BJ (cell line): ENCODE measurements at regions of chr3 and their contacts with region 1.

Region 1: GRCh38 chr3:62188681-62189383 is 184.5 kb downstream of the FEZF2 start:
- DNase-seq: peak; percentile 16
- H3K4me3 ChIP-seq: no peak overlapping the region
- H3K27me3 ChIP-seq: no peaks in the 10 kb centered on the region
- CTCF ChIP-seq: peak; percentile 75

Region 2: DNA sequence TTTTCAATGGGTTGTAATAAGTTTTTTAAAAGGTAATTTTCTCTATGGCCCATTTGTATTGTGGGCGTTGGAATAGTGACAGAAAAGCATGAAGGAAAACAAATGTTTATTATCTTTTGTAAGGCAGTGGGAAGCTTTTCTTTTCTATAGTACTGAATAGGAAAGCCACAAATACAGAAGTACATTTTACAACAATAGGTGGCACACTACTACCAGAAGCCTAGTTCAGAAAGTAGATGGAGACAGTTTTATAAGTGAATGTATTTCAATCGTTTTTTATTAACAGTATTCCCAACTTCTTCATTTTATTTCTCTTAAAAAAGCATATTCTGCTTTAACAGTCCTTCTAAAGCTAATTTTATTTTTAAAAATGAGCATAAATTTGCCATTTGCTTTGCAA is 330.8 kb before region 1 on chr3:
- CTCF ChIA-PET with region 1: interaction called, 16 read pairs
- POLR2A ChIA-PET with region 1: no interaction called
- DNase-seq: no peak
- H3K4me3 ChIP-seq: no peak overlapping the region
- H3K27me3 ChIP-seq: no peaks in the 10 kb centered on the region
- CTCF ChIP-seq: peak; percentile 41

Region 3: DNA sequence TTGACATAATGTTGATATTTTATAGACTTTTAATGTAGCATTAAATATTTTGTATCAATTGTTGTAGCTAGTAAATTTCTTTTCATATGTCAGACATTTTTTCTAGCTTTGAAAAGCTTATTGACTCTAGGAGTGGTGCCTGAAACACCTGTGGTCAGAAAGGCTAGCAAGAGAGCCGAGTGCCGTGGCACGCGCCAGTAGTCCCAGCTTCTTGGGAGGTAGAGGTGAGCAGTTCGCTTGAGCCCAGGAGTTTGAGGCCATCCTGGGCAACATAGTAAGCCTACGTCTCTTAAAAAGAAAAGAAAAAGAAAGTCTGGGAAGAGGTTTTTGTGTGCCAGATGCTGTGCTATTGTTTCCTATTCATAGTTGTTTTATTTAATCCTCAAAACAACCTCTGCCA is 13.7 kb before region 1 on chr3:
- CTCF ChIA-PET with region 1: interaction called, 11 read pairs
- POLR2A ChIA-PET with region 1: no interaction called
- DNase-seq: no peak
- H3K4me3 ChIP-seq: no peak overlapping the region
- H3K27me3 ChIP-seq: no peaks in the 10 kb centered on the region
- CTCF ChIP-seq: no peak